ENCODE measurements at regions of chr15 and their contacts with region 1.

Region 1: DNA sequence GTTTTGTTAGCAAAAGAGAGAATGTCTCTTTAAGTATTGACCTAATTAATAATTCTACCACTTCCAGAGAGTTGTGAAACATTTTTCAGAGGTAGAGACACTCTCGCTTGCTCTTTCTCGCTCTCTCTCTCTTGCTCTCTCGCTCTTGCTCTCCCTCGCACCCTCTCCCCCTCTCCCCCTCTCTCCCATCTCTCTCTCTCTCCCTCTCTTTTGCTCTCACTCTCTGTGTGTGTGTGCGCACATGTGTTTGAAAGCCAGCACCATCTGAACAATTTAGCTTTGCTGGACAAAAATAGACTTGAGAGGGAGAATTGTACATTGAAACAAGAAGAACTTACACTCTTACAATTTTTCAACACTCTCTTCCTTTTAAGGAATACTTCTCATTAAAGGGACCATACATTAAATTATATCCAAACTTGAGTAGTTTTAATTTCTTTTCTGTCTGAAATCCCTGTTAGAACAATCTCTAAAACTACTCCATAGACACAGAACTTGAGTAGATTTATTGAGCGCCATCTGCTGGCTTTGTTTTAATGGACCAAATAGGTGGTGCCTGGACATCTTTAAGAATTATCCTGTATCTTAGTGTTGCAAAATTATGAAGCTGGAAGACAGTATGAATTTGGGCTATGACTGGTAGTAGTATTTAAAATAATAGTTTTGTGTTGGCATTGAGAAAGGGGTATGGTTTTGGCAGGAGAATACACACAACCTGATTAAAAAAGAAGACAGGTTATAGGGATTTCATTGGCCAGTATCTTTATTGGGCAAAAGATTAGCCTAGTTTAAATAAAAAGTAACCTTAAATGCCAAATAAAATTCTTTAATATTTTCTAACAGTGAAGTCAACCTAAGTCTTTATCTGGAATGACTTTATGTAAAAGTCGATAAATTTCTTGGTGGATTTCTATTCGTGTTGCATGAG is 124.6 kb downstream of the AKAP13 start:
- DNase-seq: peak in 4 of 5 donors; percentile 18 to 54 (median 26)
- H3K4me3 ChIP-seq: no peak overlapping the region
- H3K4me3 Mint-ChIP-seq: no peak overlapping the region
- H3K27ac ChIP-seq: no peak overlapping the region
- H3K27ac Mint-ChIP-seq: peak overlapping the region in 5 of 8 donors; percentile 2 to 35 (median 17)
- H3K4me1 ChIP-seq: peaks cover 20% of the 10 kb centered on the region
- H3K4me1 Mint-ChIP-seq: peaks cover 38 to 79% (median 76%) of the 10 kb centered on the region in 3 donors
- H3K27me3 ChIP-seq: no peaks in the 10 kb centered on the region
- H3K27me3 Mint-ChIP-seq: no peaks in the 10 kb centered on the region

Region 2: GRCh38 chr15:85494048-85494793 is 10.8 kb before region 1 on chr15:
- CTCF ChIA-PET with region 1: interaction called, 18 read pairs
- POLR2A ChIA-PET with region 1: no interaction called
- DNase-seq: no peak
- H3K4me3 ChIP-seq: no peak overlapping the region
- H3K4me3 Mint-ChIP-seq: peak overlapping the region in 1 of 7 donors; percentile 32
- H3K27ac ChIP-seq: no peak overlapping the region
- H3K27ac Mint-ChIP-seq: peak overlapping the region in 7 of 8 donors; percentile 1 to 92 (median 64)
- H3K4me1 ChIP-seq: peaks cover 9% of the 10 kb centered on the region
- H3K4me1 Mint-ChIP-seq: peaks cover 62 to 89% (median 85%) of the 10 kb centered on the region in 3 donors
- H3K27me3 ChIP-seq: no peaks in the 10 kb centered on the region
- H3K27me3 Mint-ChIP-seq: no peaks in the 10 kb centered on the region